Naive thymus-derived CD4-positive, alpha-beta T cell (primary cell): ENCODE measurements at regions of chr12 and their contacts with region 1.

Region 1: GRCh38 chr12:108514973-108515814 is at the start of gene FICD:
- DNase-seq: peak; percentile 93 to 99 (median 98)
- ATAC-seq: peak; percentile 96
- H3K4me3 ChIP-seq: peak within 1 kb of the TSS; percentile 81
- H3K4me3 Mint-ChIP-seq: peak within 1 kb of the TSS; percentile 91 to 97 (median 94)
- H3K27ac ChIP-seq: peak within 1 kb of the TSS; percentile 78
- H3K27ac Mint-ChIP-seq: peak within 1 kb of the TSS; percentile 89 to 95 (median 94)
- H3K4me1 ChIP-seq: peaks cover 8% of the 10 kb centered on the region in 2 donors
- H3K4me1 Mint-ChIP-seq: peaks cover 17 to 40% (median 22%) of the 10 kb centered on the region in 7 donors
- H3K27me3 ChIP-seq: no peaks in the 10 kb centered on the region
- H3K27me3 Mint-ChIP-seq: peaks cover 0 to 2% (median 0%) of the 10 kb centered on the region in 5 donors
- total RNA-seq, gene FICD: 2.8 to 9.7 (median 6.9) TPM

Region 2: DNA sequence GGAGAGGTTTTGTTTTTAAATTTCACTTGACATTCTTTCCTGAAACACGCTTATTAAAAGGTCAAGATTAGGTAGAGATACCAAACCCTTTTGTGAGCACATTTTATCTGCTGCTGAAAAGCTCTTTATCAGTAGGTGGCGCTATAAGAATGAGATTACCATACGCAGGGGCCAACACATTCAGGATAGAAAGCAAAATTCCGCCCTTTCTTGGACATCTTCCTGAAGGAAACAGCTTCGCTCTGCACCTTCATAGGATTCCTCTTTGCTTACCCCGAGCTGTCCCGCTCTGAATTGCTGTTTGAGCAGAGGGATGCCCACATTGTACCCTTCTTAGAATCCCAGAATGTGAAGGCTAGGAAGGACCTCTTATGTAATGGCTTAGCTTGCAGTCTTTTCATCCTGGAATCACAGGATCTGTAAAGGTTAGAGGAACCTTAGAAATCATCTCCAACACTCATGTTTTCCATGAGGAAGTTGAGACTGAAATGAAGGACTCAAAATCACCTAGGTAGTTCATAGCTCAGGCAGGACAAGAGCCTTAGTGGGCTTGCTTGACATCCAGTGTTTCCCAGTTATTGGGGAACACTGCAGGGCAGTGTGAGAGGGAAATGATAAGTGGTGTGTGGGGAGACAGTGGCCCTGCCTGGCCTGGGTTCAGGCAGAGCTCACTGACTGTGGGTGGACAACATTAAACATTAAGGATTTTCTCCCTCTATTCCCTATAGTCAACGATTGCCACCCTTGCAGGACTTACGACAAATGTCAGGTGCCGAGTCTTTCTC is 1383.2 kb before region 1 on chr12:
- CTCF ChIA-PET with region 1: no interaction called
- POLR2A ChIA-PET with region 1: no interaction called
- intact Hi-C with region 1: loop called in 1 of 2 experiments (anchors 10 kb)
- DNase-seq: peak in 6 of 9 donors; percentile 5 to 56 (median 42)
- ATAC-seq: peak; percentile 59
- H3K4me3 ChIP-seq: no peak overlapping the region
- H3K4me3 Mint-ChIP-seq: no peak overlapping the region
- H3K27ac ChIP-seq: no peak overlapping the region
- H3K27ac Mint-ChIP-seq: peak overlapping the region in 2 of 9 donors; percentile 12 to 46
- H3K4me1 ChIP-seq: no peaks in the 10 kb centered on the region
- H3K4me1 Mint-ChIP-seq: peaks cover 0 to 5% (median 0%) of the 10 kb centered on the region in 7 donors
- H3K27me3 ChIP-seq: no peaks in the 10 kb centered on the region
- H3K27me3 Mint-ChIP-seq: peaks cover 0 to 1% (median 0%) of the 10 kb centered on the region in 5 donors

Region 3: DNA sequence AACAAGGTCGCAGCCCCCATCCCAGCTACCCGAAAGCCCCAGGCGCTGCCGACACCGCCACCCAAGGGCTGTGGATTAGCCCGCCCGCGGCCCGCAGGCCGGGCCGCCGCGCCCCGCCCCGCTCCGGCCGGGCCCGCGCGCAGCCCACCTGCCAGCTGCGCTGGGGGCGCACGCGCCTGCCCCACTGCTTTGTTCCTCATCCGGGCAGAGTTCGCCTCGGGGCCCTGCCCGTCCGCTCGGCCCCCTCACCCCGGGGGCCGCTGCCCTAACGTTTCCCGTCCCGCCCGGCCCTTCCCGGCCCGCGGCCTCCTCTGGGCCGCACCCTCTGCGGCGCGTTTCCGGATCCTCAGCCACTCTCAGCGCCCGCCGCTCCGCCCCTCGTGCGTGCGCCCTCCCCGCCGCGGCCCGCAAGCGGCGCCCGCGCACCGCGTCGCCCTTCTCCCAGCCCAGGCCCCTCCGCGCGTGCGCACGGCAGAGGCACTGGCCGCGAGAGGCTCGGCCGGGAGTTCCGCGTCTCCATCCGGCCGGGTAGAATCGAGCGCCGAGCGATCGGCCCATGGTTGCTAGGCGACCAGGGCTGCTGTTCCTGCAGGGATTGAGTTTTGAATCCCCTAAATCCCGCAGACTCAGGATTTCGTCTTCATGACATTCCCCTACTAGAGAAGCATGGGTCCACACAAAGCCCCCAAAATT is 754.2 kb before region 1 on chr12 and contains the start of gene PRDM4:
- CTCF ChIA-PET with region 1: no interaction called
- POLR2A ChIA-PET with region 1: no interaction called
- intact Hi-C with region 1: loop called (anchors 1 to 5 kb)
- DNase-seq: peak; percentile 85 to 96 (median 93)
- ATAC-seq: peak; percentile 99
- H3K4me3 ChIP-seq: peak within 1 kb of the TSS; percentile 83
- H3K4me3 Mint-ChIP-seq: peak within 1 kb of the TSS; percentile 85 to 94 (median 91)
- H3K27ac ChIP-seq: peak within 1 kb of the TSS; percentile 78
- H3K27ac Mint-ChIP-seq: peak within 1 kb of the TSS; percentile 85 to 96 (median 91)
- H3K4me1 ChIP-seq: peaks cover 21% of the 10 kb centered on the region in 2 donors
- H3K4me1 Mint-ChIP-seq: peaks cover 19 to 52% (median 35%) of the 10 kb centered on the region in 7 donors
- H3K27me3 ChIP-seq: no peaks in the 10 kb centered on the region
- H3K27me3 Mint-ChIP-seq: peaks cover 0 to 5% (median 0%) of the 10 kb centered on the region in 5 donors
- total RNA-seq, gene PRDM4: 32.4 to 41.3 (median 36.4) TPM

Region 4: DNA sequence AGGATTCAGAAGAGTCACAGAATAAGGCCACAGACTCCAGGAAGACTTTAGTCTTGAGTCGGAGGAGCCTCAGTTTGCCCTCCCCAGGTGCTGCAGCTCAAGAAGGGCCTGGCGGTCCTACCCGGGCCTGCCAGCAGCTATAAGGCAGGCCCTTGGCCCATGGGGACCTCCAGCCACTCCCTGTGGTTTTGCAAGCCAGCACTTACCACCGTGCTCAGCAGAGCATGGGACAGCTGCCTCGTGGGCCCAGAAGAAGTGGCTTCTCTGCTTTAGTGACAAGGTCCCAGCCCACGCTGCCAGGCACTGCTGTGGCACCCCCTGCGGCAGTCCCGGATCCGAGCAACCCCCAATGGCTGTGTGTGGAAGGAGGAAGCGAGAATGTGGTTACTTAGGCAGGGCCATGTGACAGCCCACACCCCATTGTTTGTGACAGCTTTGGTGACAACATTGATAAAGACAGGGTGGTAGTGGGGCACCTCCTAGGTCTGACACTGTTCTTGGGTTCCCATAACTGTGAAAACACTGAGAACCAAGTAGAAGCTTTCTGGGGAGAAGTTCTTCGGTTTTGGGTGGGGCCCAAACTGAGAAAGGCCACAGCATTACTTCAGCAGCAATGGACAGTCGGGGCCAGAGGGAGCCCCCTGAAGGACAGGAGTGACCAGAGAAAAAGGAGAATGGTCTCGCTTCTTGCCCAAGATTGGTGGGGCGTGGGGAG is 118.5 kb after region 1 on chr12 and contains the start of gene SELPLG:
- CTCF ChIA-PET with region 1: no interaction called
- POLR2A ChIA-PET with region 1: no interaction called
- intact Hi-C with region 1: loop called (anchors 1 to 5 kb)
- DNase-seq: peak; percentile 70 to 96 (median 93)
- ATAC-seq: peak; percentile 83
- H3K4me3 ChIP-seq: peak within 1 kb of the TSS; percentile 98
- H3K4me3 Mint-ChIP-seq: peak within 1 kb of the TSS; percentile 90 to 100 (median 99)
- H3K27ac ChIP-seq: peak within 1 kb of the TSS; percentile 89
- H3K27ac Mint-ChIP-seq: peak within 1 kb of the TSS; percentile 95 to 100 (median 98)
- H3K4me1 ChIP-seq: peaks cover 50 to 53% of the 10 kb centered on the region in 2 donors
- H3K4me1 Mint-ChIP-seq: peaks cover 50 to 73% (median 66%) of the 10 kb centered on the region in 7 donors
- H3K27me3 ChIP-seq: no peaks in the 10 kb centered on the region
- H3K27me3 Mint-ChIP-seq: no peaks in the 10 kb centered on the region
- total RNA-seq, gene SELPLG: 54.3 to 217 (median 154) TPM

Region 5: GRCh38 chr12:108856428-108857157 is 341.4 kb after region 1 on chr12:
- CTCF ChIA-PET with region 1: no interaction called
- POLR2A ChIA-PET with region 1: interaction called, 9 read pairs
- intact Hi-C with region 1: loop called (anchors 1 to 2 kb)
- DNase-seq: peak; percentile 35 to 77 (median 54)
- ATAC-seq: peak; percentile 68
- H3K4me3 ChIP-seq: peak overlapping the region; percentile 84
- H3K4me3 Mint-ChIP-seq: peak overlapping the region; percentile 89 to 97 (median 94)
- H3K27ac ChIP-seq: peak overlapping the region; percentile 62
- H3K27ac Mint-ChIP-seq: peak overlapping the region; percentile 76 to 99 (median 92)
- H3K4me1 ChIP-seq: peaks cover 18 to 23% of the 10 kb centered on the region in 2 donors
- H3K4me1 Mint-ChIP-seq: peaks cover 26 to 56% (median 47%) of the 10 kb centered on the region in 7 donors
- H3K27me3 ChIP-seq: no peaks in the 10 kb centered on the region
- H3K27me3 Mint-ChIP-seq: peaks cover 0 to 2% (median 0%) of the 10 kb centered on the region in 5 donors

Region 6: DNA sequence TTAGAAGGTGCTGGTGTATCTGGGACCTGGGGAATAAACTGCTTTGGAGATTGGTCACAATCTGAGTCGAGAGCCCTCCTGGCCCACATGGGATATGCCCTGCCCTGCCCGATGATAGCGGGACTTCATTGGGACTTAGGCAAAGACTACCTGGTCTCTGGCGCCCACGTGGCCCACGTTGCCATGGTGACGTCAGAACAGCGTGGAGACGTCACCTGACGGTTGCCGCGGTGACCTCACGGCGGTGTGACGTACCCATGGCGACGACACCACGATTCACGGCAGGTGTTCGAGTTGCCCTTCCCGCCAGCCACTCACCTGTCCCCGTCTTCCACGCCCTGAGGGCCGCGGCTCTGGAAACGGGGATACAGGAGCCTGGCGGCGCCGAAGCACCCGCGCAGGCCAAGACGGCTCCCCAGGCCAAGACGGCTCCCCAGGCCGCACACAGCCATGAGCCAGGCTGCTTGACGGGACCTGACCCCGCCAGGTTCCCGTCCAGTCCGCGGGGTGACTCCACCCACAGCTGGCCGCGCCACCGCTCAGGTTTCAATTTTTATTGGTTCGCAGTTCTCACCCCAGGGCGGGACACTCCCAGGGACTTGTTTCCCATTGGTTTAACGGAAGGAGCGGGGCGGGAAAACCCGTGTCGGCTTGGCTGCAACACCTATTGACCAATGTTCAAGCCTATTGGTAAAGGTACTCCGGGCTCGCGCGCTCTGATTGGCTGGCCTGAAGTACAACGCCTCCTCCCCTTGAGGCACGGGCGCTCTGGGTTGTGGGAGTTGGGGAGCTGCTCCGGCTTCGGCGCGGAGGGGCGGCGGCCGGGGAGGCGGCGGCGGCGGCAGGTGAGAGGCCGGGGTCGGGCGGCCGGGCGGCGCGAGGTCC is 1058.1 kb after region 1 on chr12 and contains the starts of genes MMAB and MVK:
- CTCF ChIA-PET with region 1: no interaction called
- POLR2A ChIA-PET with region 1: no interaction called
- intact Hi-C with region 1: loop called (anchors 2 to 10 kb)
- DNase-seq: peak; percentile 87 to 99 (median 99)
- ATAC-seq: peak; percentile 97
- H3K4me3 ChIP-seq: peak within 1 kb of the TSS; percentile 75
- H3K4me3 Mint-ChIP-seq: peak within 1 kb of the TSS; percentile 90 to 97 (median 94)
- H3K27ac ChIP-seq: peak within 1 kb of the TSS; percentile 95
- H3K27ac Mint-ChIP-seq: peak within 1 kb of the TSS; percentile 87 to 100 (median 95)
- H3K4me1 ChIP-seq: peaks cover 13 to 16% of the 10 kb centered on the region in 2 donors
- H3K4me1 Mint-ChIP-seq: peaks cover 9 to 39% (median 36%) of the 10 kb centered on the region in 7 donors
- H3K27me3 ChIP-seq: no peaks in the 10 kb centered on the region
- H3K27me3 Mint-ChIP-seq: no peaks in the 10 kb centered on the region
- total RNA-seq, gene MMAB: 13.5 to 24.7 (median 20.1) TPM
- total RNA-seq, gene MVK: 10.0 to 14.8 (median 11.7) TPM